Lower leg skin (tissue), 4 donors: ENCODE measurements at regions of chr14 and their contacts with region 1.

Region 1: GRCh38 chr14:82298811-82299210 is 765.2 kb upstream of the SEL1L start:
- DNase-seq: no peak
- H3K4me3 ChIP-seq: no peak overlapping the region
- CTCF ChIP-seq: no peak
- POLR2A ChIP-seq: no peak

Region 2: DNA sequence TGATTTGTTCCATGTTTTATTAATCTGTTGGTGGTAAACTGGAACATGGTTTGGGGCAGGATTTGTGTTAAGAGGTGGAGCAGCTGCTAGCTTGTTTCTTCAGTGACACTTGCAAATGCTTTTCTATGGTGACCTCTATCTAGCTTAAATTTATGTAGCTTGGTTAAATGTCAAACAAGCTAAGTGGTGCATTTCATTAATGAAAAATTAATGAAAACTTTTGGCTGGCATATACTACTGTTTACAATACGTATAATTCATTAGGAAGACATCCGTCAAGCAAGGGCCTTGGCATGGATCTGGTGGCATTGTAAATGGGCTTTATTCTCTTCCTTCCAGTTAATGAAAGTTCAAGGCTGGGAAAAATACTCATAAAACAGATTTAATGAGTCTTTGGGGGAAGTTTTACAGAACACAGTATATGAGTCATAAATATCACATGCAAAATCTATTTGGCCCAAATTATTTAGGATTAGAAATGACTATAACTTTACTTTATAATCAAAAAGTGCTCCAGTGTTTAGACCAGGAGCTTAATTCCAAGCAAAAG is 42.5 kb after region 1 on chr14:
- intact Hi-C with region 1: no loop called
- DNase-seq: no peak
- H3K4me3 ChIP-seq: no peak overlapping the region
- CTCF ChIP-seq: no peak
- POLR2A ChIP-seq: no peak

Region 3: GRCh38 chr14:82488473-82488872 is 189.7 kb after region 1 on chr14:
- intact Hi-C with region 1: no loop called
- DNase-seq: no peak
- H3K4me3 ChIP-seq: no peak overlapping the region
- CTCF ChIP-seq: no peak
- POLR2A ChIP-seq: no peak

Region 4: GRCh38 chr14:83575301-83575700 is 1276.5 kb after region 1 on chr14:
- intact Hi-C with region 1: loop called (anchors 5 kb)
- DNase-seq: no peak
- H3K4me3 ChIP-seq: no peak overlapping the region
- CTCF ChIP-seq: no peak
- POLR2A ChIP-seq: no peak